G401 (cell line): ENCODE measurements at regions of chr4 and their contacts with region 1.

Region 1: DNA sequence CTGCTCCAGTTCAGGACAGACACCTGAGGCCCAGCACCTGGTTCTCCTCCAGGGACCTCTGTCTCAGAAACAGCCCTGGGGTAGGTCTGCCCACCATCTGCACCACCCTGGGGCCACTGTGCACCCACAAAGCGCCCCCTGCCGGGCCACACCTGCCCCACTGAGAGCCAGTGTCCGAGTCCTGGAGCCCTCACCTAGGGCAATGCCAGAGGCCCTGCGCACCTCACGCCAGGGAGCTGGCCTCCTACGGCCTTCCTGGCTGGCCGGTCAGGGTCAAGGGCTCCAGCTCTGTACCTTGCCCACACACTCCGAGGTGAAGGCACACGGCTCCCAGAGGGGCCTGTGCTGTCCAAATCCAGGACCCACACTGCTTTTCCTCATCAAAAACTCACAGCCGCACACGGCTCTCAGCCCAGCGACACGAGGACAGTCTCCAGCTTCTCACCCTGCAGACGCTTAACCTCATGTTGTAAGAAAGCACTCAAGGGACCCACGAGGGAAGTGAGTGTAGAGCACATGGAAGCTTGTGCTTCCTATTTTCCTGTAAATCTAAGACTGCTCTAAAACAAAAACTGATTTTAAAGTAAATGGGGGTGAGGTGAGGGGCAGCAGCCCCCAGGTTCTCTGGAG is 5.4 kb downstream of the CTBP1 start:
- DNase-seq: peak; percentile 21

Region 2: GRCh38 chr4:1026115-1026514 is 217.5 kb before region 1 on chr4:
- in situ Hi-C with region 1: no loop called
- DNase-seq: no peak

Region 3: GRCh38 chr4:1171306-1172227 is 72.0 kb before region 1 on chr4:
- in situ Hi-C with region 1: loop called (anchors 5 kb)
- DNase-seq: peak; percentile 73

Region 4: DNA sequence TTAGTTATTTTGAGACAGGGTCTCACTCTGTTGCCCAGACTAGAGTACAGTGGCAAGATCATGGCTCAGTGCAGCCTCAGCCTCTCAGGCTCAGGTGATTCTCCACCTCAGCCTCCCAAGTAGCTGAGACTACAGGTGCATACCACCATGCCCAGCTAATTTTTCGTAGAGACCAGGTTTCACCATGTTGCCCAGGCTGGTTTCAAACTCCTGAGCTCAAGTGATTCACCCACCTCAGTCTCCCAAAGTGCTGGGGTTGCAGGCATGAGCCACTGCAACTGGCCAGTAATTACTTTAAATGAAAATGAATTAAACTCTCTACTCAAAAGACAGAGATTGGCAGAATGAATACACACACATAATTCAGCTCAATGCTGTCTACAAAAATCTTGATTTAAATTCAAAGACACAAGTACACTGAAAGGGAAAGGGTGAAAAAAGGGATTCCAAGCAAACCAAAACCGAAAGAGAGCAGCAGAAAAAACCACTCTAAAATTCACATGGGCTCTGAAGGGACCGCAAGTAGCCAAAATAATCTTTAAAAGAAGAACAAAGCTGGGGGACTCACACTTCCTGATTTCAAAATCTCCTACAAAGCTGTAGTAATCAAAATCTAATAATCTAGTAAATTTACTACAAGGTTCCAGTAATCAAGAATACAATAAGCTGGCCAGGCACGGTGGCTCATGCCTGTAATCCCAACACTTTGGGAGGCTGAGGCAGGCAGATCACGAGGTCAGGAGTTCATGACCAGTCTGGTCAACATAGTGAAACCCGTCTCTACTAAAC is 59.4 kb before region 1 on chr4:
- in situ Hi-C with region 1: no loop called
- DNase-seq: no peak